ENCODE measurements at regions of chr10 and their contacts with region 1.

Region 1: DNA sequence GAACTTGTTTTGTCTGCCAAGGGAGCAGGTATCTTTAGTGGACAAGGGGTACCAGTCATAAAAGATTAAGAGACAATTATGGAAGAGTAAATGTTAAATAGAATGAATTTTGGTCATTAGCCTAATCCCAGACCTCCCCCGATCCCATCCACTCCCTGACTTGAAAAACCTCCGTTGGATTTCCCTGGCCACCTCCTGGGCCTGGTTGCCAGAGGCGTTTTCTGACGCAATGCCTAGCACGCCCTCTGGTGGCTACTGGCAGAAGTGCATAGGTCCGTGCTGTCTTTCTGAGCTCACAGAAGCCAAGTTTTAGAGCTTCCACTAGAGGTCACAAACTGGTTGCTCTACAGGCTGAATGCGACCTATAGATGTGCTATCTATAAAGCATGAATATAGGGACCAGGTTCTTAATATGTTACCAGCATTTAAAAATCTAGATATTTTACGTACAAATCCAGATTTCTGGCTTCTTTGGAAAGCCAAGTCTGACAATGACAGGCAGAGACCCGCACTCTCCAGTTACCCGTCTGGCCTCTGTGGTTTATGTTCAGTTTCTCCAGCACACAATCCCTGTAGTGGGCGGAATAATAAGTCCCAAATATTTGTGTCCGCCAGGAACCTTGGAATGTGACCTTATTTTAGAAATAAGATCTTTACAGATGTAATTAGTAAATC is 39.8 kb downstream of the SPOCK2 start:
- DNase-seq: peak; percentile 88
- H3K4me3 ChIP-seq: peak overlapping the region in 1 of 2 experiments; percentile 46; a peak in 1 of 4 replicates
- H3K27ac ChIP-seq: no peak overlapping the region
- H3K4me1 ChIP-seq: peaks cover 0 to 7% of the 10 kb centered on the region in 2 experiments; a peak in 1 of 4 replicates
- H3K27me3 ChIP-seq: no peaks in the 10 kb centered on the region
- CTCF ChIP-seq: peak; percentile 100
- EP300 ChIP-seq: peak in 1 of 2 experiments; percentile 31; a peak in 1 of 4 replicates
- RAD21 ChIP-seq: peak; percentile 100

Region 2: DNA sequence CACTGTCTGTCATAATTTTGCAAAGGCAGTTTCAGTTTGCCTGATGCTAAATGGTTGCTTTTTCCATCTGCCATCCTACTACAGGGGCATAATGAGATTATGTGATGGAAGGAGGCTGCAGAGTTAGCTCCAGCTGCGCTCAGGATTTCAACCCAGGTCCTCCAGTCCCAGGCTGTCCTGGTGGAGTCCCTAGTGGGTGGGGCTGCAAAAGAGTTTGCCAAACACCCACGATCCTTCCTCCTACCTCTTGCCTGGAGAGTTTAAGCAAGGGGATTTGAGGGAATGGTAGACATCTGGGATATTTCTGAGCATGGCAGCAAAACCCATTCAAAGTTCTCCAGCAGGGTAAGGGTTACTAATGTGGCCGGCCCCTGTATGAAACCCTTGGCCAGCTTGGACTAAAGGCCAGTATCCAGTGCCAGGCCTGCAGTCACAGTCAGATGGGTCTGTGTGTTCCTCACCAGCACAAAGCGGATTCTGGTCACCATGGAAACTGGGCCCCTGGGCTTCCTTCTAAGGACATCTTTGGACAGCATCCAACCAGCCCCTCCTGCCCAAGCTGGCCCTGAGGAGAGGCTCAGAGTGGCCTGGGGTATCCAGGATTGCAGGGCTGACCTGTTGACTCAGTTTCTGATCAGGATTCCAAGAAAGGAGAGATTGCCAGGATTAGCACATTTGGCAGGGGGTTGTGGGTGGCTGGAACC is 127.1 kb before region 1 on chr10:
- CTCF ChIA-PET with region 1: interaction called, 10 read pairs
- POLR2A ChIA-PET with region 1: no interaction called
- DNase-seq: peak; percentile 80
- H3K4me3 ChIP-seq: no peak overlapping the region
- H3K27ac ChIP-seq: peak overlapping the region in 1 of 2 experiments; percentile 50; a peak in 2 of 4 replicates
- H3K4me1 ChIP-seq: peaks cover 5 to 17% of the 10 kb centered on the region in 2 experiments; a peak in 3 of 4 replicates
- H3K27me3 ChIP-seq: no peaks in the 10 kb centered on the region; the same call in 1 of the 2 replicates
- CTCF ChIP-seq: no peak
- EP300 ChIP-seq: no peak
- RAD21 ChIP-seq: no peak

Region 3: DNA sequence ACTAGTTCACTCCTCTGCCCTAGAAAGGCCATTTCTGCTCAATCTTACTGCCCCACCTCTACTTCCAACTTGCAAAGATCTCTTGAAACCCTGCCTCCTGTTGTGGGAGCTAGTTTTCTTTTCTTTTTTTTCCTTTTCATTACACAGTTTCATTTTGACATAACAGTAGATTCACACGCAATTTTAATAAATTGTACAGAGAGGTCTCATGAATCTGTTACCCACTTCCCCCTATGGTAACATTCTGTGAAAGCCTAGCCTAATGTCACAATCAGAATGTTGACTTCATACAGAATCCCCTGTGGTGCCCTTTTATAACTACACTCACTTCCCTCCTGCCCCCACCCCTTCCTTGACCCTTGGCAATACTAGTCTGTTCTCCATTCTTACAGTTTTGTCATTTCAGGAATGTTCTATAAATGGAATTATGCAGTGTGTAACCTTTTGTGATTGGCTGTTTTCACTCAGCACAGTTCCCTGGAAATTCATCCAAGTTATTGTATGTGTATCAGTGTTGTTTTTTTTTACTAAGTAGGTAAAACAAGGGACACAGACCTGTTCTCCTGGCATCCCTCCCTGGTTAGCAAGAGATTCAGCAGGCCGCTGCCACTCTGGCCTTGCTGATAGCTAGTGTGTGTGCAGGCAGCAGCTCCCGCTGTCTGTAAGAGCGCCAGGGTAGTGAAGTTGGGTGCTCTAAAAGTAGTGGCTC is 62.9 kb before region 1 on chr10:
- CTCF ChIA-PET with region 1: interaction called, 14 read pairs
- POLR2A ChIA-PET with region 1: no interaction called
- DNase-seq: no peak
- H3K4me3 ChIP-seq: no peak overlapping the region
- H3K27ac ChIP-seq: peak overlapping the region; percentile 25 to 70; a peak in 3 of 4 replicates
- H3K4me1 ChIP-seq: peaks cover 11 to 39% of the 10 kb centered on the region in 2 experiments; a peak in 2 of 4 replicates
- H3K27me3 ChIP-seq: no peaks in the 10 kb centered on the region
- CTCF ChIP-seq: no peak
- EP300 ChIP-seq: no peak
- RAD21 ChIP-seq: no peak

Region 4: GRCh38 chr10:72038458-72039001 is 10.1 kb before region 1 on chr10:
- CTCF ChIA-PET with region 1: interaction called, 35 read pairs
- POLR2A ChIA-PET with region 1: no interaction called
- DNase-seq: no peak
- H3K4me3 ChIP-seq: no peak overlapping the region
- H3K27ac ChIP-seq: no peak overlapping the region
- H3K4me1 ChIP-seq: no peaks in the 10 kb centered on the region
- H3K27me3 ChIP-seq: no peaks in the 10 kb centered on the region
- CTCF ChIP-seq: no peak
- EP300 ChIP-seq: no peak
- RAD21 ChIP-seq: no peak

Region 5: DNA sequence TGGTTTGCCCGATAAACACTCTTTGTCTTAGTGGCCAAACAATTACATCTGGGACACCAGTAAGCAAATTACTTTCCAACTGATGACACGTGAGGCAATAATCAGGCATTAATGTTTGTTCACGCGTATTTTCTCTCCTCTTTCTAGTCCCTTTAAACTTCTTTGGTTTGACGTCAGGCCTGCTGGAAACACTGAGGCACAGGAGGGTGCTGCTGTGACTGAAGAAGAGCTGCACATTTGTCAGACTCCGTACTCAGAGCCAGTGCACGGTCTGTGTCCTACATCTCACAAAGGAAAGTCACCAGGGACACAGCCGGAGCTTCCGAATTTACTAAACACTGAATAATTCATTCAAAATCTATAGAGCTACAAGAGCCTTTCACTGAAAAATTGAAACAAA is 109.6 kb after region 1 on chr10:
- CTCF ChIA-PET with region 1: no interaction called
- POLR2A ChIA-PET with region 1: no interaction called
- DNase-seq: no peak
- H3K4me3 ChIP-seq: no peak overlapping the region
- H3K27ac ChIP-seq: no peak overlapping the region
- H3K4me1 ChIP-seq: no peaks in the 10 kb centered on the region
- H3K27me3 ChIP-seq: no peaks in the 10 kb centered on the region
- CTCF ChIP-seq: no peak
- EP300 ChIP-seq: no peak
- RAD21 ChIP-seq: no peak

Region 6: DNA sequence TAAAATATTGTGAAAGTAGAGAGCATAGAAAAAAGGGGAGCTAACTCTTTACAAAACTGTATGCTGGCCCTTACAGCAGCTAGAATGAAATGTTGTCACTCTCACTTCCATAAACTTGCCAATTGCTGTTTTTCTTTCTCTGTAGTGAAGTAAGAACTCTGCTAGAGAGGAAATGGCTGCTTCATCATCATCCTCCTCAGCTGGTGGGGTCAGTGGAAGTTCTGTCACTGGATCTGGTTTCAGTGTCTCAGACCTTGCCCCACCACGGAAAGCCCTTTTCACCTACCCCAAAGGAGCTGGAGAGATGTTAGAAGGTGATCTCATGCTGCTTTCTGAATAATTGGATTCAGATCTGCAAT is 175.1 kb after region 1 on chr10:
- CTCF ChIA-PET with region 1: interaction called, 37 read pairs
- POLR2A ChIA-PET with region 1: no interaction called
- DNase-seq: no peak
- H3K4me3 ChIP-seq: no peak overlapping the region
- H3K27ac ChIP-seq: no peak overlapping the region
- H3K4me1 ChIP-seq: peaks cover 5% of the 10 kb centered on the region in 2 experiments; a peak in 2 of 4 replicates
- H3K27me3 ChIP-seq: no peaks in the 10 kb centered on the region
- CTCF ChIP-seq: no peak
- EP300 ChIP-seq: no peak
- RAD21 ChIP-seq: no peak

Region 7: GRCh38 chr10:72297968-72298773 is 249.6 kb after region 1 on chr10:
- CTCF ChIA-PET with region 1: no interaction called
- POLR2A ChIA-PET with region 1: no interaction called
- DNase-seq: peak; percentile 98
- H3K4me3 ChIP-seq: peak overlapping the region; percentile 64 to 71
- H3K27ac ChIP-seq: peak overlapping the region; percentile 55 to 86; a peak in 3 of 4 replicates
- H3K4me1 ChIP-seq: peaks cover 6 to 16% of the 10 kb centered on the region in 2 experiments; a peak in 2 of 4 replicates
- H3K27me3 ChIP-seq: no peaks in the 10 kb centered on the region
- CTCF ChIP-seq: no peak
- EP300 ChIP-seq: no peak
- RAD21 ChIP-seq: no peak